ENCODE measurements at regions of chr1 and their contacts with region 1.

Region 1: DNA sequence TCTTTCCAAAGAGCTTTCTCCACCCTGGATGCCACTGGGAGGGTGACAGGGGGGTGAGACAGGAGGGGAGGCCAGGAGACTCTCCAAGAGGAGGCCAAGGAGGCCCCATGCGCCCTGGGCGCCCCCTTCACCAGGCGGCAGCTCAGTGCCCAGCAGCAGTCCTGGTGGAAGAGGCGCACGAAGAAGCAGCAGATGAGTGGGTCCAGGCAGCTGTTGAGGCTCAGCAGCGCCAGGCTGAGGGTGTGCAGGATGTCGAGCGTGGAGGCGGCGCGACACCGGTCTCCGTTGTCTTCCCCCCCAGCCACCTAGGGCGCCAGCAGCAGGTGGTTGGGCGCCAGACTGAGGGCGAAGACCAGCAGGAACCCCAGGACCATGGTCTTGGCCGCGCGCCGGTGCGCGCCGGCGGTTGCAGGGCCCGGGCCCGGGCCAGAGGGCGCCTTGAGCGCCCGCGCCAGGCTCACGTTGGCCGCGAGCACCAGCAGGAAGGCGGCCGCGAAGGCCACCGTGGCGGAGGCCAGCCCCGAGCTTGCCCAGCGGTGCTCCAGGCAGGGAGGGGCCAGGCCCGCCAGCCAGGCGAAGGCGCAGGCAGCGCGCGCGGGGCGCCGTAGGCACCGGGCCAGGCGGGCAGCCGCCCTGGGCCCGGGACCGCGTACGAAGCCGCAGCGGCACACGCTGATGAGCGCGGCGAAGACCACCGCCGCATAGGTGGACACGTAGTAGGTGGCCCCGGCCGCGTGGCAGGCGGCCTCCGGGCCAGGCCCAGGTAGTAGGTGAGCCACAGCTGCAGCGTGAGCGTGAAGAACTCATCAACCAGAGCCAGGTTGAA is 8.6 kb downstream of the TMEM35B start:
- DNase-seq: no peak
- ATAC-seq: no peak
- H3K4me3 ChIP-seq: no peak overlapping the region
- H3K27ac ChIP-seq: no peak overlapping the region
- H3K4me1 ChIP-seq: no peaks in the 10 kb centered on the region
- H3K27me3 ChIP-seq: no peaks in the 10 kb centered on the region
- CTCF ChIP-seq: no peak

Region 2: DNA sequence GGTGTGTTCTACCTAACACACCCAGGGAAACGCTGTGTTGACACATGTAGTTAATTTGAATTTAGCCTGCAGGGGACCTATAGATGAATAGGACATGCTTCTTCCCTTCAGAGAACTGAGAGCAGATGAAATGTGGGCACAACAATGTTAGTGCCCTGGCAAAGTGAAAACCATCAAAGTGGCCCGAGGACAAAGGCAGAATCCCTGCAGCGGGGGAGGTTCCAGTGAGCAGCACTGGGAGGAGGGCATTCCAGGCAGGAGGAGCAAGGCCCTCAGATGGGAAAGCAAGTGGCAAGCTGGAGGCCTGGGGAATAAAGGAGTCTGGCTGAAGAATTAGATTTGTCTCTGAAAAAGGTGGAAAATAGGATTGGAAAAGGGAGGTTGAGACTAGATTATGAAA is 762.6 kb before region 1 on chr1:
- CTCF ChIA-PET with region 1: no interaction called
- POLR2A ChIA-PET with region 1: no interaction called
- in situ Hi-C with region 1: no loop called
- intact Hi-C with region 1: no loop called
- DNase-seq: no peak
- ATAC-seq: no peak
- H3K4me3 ChIP-seq: no peak overlapping the region
- H3K27ac ChIP-seq: no peak overlapping the region
- H3K4me1 ChIP-seq: no peaks in the 10 kb centered on the region
- H3K27me3 ChIP-seq: peaks cover 3% of the 10 kb centered on the region; the same call in 1 of the 2 replicates
- CTCF ChIP-seq: no peak

Region 3: DNA sequence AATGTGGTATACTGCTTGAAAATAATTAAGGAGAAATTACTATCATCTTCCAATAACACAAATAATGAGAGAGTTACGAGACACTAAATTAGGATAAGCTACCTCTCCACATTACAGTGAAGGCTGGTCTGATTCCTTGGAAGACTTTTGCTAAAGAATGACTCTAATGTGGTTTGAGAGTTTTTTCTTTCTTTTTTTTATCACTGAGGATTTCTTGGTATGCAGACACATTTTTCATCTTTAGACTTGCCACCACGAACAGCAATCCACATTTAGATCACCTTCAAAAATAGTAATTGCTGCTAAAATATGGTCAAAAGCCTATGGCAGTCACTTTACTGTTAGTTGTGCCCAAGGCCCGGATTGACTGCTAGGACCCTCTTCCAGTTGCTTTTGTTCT is 25.1 kb after region 1 on chr1:
- CTCF ChIA-PET with region 1: no interaction called
- POLR2A ChIA-PET with region 1: interaction called, 16 read pairs
- in situ Hi-C with region 1: no loop called
- intact Hi-C with region 1: no loop called
- DNase-seq: no peak
- ATAC-seq: no peak
- H3K4me3 ChIP-seq: no peak overlapping the region
- H3K27ac ChIP-seq: no peak overlapping the region
- H3K4me1 ChIP-seq: no peaks in the 10 kb centered on the region
- H3K27me3 ChIP-seq: no peaks in the 10 kb centered on the region
- CTCF ChIP-seq: no peak